ENCODE measurements at regions of chr2 and their contacts with region 1.

Region 1: DNA sequence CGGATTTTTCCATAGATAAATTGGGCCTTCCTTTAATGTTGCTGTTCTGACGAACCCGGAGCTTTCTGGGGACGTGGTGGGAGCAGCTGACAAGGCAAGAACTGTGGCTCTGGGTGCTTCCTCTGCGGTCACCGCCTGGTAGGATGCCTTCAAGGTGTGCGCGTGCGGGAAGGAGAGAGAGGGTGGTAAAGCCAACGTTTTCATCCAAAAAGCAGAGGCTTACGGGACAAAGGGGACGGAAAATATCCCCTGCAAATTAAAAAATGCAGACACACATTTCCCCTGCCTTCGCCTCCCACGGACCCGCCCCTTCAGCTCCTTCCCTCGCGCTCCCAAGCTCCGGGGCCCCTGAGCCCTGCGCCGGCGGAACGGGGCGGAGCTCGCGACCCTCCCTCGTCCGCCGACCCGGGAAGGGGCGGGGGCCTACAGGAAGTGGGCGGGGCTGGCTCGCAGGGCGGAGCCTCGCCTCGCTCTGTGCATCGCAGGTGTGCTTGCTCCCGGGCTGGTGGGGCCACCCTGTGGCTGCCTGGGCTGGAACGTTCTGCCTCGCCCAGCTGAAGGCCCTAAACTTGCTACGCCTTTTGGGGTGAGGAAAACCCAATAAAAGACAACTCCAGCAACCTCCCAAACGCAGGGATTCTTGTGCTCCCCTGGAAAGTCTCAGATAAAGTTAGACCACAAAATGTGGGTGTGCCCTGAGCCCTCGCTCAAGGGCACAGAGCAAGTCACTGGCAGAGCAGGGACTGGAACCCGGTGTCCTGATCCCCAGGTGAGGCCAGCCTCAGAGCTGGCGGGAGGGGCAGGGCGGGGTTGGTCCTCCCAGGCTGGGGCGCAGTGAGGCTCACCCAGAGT is 25.4 kb upstream of the SLC66A3 start:
- DNase-seq: no peak
- H3K4me3 ChIP-seq: peak overlapping the region; percentile 39
- CTCF ChIP-seq: no peak

Region 2: GRCh38 chr2:10188216-10188615 is 941.6 kb before region 1 on chr2:
- CTCF ChIA-PET with region 1: no interaction called
- POLR2A ChIA-PET with region 1: no interaction called
- DNase-seq: no peak
- H3K4me3 ChIP-seq: no peak overlapping the region
- CTCF ChIP-seq: peak; percentile 38

Region 3: DNA sequence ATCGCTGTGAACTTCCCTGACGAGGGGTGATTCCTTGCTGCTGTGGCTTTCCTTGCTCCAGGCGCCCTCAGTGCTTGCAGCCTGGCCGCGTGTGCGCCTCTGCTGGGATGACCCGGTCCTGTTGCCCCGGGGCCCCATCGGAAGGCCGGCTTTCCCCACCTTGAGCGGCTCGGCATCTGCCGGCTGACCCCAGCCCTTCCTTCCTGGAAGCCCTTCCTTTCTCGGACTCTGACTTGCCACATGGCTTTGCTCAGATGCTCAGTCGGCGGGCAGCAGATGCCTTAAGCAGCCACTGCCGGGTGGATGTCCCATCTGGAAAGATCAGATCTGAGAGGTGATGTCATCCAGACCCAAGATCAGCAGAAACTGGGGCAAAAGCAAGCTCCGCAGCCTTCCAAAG is 581.2 kb before region 1 on chr2:
- CTCF ChIA-PET with region 1: no interaction called
- POLR2A ChIA-PET with region 1: no interaction called
- DNase-seq: no peak
- H3K4me3 ChIP-seq: no peak overlapping the region; the same call in 1 of the 2 replicates
- CTCF ChIP-seq: no peak

Region 4: GRCh38 chr2:10700078-10700803 is 429.6 kb before region 1 on chr2:
- CTCF ChIA-PET with region 1: no interaction called
- POLR2A ChIA-PET with region 1: no interaction called
- DNase-seq: no peak
- H3K4me3 ChIP-seq: no peak overlapping the region
- CTCF ChIP-seq: no peak

Region 5: DNA sequence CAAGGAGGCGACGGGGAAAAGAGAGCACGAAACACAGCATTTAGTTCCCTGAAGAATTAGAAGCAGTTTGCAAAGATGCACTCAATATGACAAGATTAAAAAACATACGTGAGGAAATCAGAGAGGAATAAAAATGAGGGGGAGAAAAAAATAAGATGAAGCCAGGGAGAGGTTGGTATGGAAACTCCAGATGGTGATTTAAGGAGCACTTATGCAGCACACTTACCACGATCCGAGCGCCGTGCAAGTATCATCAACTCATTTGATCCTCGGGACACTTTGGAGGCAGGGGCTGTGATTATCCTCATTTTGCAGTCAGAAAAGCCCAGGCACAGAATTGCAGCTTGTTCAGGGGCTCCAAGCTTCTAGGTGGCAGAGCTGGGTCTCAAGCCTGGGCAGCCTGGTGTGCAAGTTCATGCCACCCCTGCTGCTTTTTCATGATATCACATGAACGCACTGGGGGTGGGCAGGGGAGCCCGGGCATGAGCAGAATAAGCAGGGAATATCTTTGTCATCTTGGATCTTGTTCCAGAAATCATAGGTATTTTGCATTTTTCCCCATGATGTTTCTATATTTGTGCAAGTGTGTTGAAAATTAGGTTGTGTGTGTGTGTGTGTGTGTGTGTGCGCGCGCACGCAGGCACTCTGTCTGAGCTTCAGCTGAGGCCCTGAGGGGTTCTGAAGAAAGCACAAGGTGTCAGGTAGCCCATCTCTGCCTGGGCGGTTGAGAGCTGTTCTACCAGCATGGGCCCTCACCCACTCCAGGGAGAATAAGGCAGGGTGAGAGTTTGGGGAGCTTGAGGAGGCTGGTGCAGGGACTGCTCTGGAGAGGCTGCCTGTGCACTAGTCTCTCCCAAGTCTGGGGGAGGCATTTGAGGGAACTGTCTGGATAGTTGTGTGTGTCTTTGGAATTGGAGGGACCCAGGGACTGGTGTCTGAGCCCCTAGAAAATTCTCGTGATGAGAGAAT is 292.2 kb before region 1 on chr2:
- CTCF ChIA-PET with region 1: interaction called, 609 read pairs
- POLR2A ChIA-PET with region 1: interaction called, 3 read pairs
- DNase-seq: no peak
- H3K4me3 ChIP-seq: no peak overlapping the region
- CTCF ChIP-seq: no peak

Region 6: GRCh38 chr2:11187083-11187619 is 57.3 kb after region 1 on chr2:
- CTCF ChIA-PET with region 1: interaction called, 11 read pairs
- POLR2A ChIA-PET with region 1: no interaction called
- DNase-seq: no peak
- H3K4me3 ChIP-seq: no peak overlapping the region
- CTCF ChIP-seq: no peak

Region 7: GRCh38 chr2:11234309-11234708 is 104.5 kb after region 1 on chr2:
- CTCF ChIA-PET with region 1: interaction called, 13 read pairs
- POLR2A ChIA-PET with region 1: no interaction called
- DNase-seq: no peak
- H3K4me3 ChIP-seq: no peak overlapping the region
- CTCF ChIP-seq: peak; percentile 14

Region 8: GRCh38 chr2:11254100-11254536 is 124.3 kb after region 1 on chr2:
- CTCF ChIA-PET with region 1: no interaction called
- POLR2A ChIA-PET with region 1: no interaction called
- DNase-seq: no peak
- H3K4me3 ChIP-seq: no peak overlapping the region
- CTCF ChIP-seq: no peak

Region 9: GRCh38 chr2:11446733-11447248 is 317.0 kb after region 1 on chr2:
- CTCF ChIA-PET with region 1: interaction called, 172 read pairs
- POLR2A ChIA-PET with region 1: interaction called, 3 read pairs
- DNase-seq: no peak
- H3K4me3 ChIP-seq: no peak overlapping the region
- CTCF ChIP-seq: peak; percentile 69

Region 10: GRCh38 chr2:11477994-11478393 is 348.2 kb after region 1 on chr2:
- CTCF ChIA-PET with region 1: interaction called, 41 read pairs
- POLR2A ChIA-PET with region 1: no interaction called
- DNase-seq: peak; percentile 40
- H3K4me3 ChIP-seq: no peak overlapping the region
- CTCF ChIP-seq: peak; percentile 74

Measured in AG04449 (cell line).